ENCODE measurements at regions of chr3 and their contacts with region 1.

Region 1: DNA sequence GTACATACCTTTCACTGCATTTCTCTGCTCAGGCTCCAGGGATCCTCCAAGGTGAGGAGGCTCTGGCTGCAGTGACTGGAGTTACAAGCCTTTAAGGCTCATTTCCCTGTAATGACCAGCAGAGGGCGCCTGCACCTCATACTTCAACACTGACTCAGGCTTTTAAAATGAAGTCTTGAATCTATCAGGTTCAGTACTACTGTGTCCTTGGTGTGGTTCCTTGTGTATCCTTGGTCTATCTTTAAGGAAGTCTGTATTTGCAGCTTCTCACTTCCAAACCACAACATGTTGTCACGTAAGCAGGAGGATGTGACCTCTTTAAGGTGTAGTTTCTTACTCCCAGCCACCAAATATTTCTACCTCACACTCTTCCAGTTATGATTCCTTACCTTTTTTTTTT is 122.5 kb upstream of the ZBED2 start:
- H3K4me3 ChIP-seq: no peak overlapping the region
- H3K27ac ChIP-seq: no peak overlapping the region
- H3K4me1 ChIP-seq: no peaks in the 10 kb centered on the region
- CTCF ChIP-seq: peak; percentile 74

Region 2: DNA sequence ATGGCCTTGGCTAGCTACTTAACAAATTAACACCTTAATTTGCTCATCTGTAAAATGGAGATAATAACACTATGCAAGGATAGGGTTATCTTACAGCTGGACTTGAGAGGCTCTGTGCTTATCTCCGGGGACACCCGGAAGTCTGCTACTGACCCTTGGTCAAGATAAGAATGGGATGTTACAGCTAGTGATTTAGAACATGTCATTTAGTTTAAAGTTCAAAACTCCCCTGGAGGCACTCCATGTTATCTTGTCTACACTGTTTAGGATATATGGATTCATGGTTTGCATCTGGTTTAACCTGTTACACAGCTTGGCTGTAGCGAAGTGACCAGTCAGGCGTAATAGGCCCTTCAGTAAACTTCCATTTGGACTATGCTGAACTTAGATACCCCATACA is 331.6 kb before region 1 on chr3:
- CTCF ChIA-PET with region 1: no interaction called
- POLR2A ChIA-PET with region 1: no interaction called
- H3K4me3 ChIP-seq: no peak overlapping the region
- H3K27ac ChIP-seq: no peak overlapping the region
- H3K4me1 ChIP-seq: no peaks in the 10 kb centered on the region
- CTCF ChIP-seq: no peak

Region 3: GRCh38 chr3:111691293-111691909 is 26.2 kb before region 1 on chr3:
- CTCF ChIA-PET with region 1: interaction called, 37 read pairs
- POLR2A ChIA-PET with region 1: no interaction called
- H3K4me3 ChIP-seq: no peak overlapping the region
- H3K27ac ChIP-seq: no peak overlapping the region
- H3K4me1 ChIP-seq: peaks cover 17% of the 10 kb centered on the region
- CTCF ChIP-seq: no peak

Region 4: DNA sequence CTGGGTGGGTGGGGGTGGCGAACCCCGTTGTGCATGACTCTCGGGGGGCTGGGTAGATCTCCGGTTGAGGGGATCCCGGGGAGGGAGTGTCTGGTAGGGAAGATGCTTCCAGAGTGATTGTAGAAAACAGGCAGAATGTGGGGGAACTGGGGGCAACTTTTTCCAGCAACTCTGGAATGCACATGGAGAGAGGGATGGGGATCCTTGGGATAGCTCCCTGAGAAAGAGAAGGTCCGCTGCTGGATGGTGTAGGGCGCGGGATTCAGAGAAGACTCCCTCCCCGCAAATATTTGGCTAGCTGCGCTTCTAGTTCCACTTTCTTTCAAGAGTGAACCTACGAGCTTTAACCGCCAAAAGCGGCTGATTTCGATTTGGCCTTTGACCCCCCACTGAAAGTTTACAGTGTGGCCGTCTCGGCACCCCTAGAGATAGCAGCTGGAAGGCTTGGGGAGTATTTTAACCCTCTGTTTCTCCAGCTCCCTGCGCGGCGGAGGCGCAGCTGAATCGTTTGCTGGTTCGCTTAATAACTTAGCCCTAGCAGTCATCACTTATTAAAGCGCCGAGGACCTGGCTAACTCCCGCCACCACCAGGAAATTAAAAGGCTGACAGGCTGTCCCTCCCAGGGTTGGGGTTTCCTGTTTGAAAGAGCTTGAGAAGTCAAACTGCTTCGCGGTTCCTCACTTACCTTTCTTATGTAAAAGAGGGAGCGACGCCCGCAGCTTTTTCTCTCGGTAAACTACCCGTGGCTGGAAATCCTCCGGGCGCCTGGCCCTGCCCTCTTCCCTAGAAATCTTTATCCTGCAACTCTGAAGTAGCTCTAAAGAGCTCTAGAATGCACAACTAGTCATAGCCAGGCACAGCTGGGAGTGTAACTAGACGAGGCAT is 142.6 kb after region 1 on chr3:
- CTCF ChIA-PET with region 1: interaction called, 52 read pairs
- POLR2A ChIA-PET with region 1: interaction called, 7 read pairs
- H3K4me3 ChIP-seq: peak overlapping the region; percentile 92
- H3K27ac ChIP-seq: peak overlapping the region; percentile 86
- H3K4me1 ChIP-seq: peaks cover 17% of the 10 kb centered on the region
- CTCF ChIP-seq: peak; percentile 32; the same call in 1 of the 2 replicates

Region 5: GRCh38 chr3:111967651-111968274 is 250.2 kb after region 1 on chr3:
- CTCF ChIA-PET with region 1: interaction called, 107 read pairs
- POLR2A ChIA-PET with region 1: interaction called, 4 read pairs
- H3K4me3 ChIP-seq: no peak overlapping the region
- H3K27ac ChIP-seq: no peak overlapping the region
- H3K4me1 ChIP-seq: no peaks in the 10 kb centered on the region
- CTCF ChIP-seq: peak; percentile 55; the same call in 1 of the 2 replicates

Region 6: GRCh38 chr3:112074721-112075497 is 357.3 kb after region 1 on chr3:
- CTCF ChIA-PET with region 1: no interaction called
- POLR2A ChIA-PET with region 1: no interaction called
- H3K4me3 ChIP-seq: no peak overlapping the region; the same call in 1 of the 2 replicates
- H3K27ac ChIP-seq: peak overlapping the region; percentile 29; the same call in 1 of the 2 replicates
- H3K4me1 ChIP-seq: no peaks in the 10 kb centered on the region
- CTCF ChIP-seq: no peak

Measured in HEK293 (cell line).